AG04449 (cell line): ENCODE measurements at regions of chr2 and their contacts with region 1.

Region 1: DNA sequence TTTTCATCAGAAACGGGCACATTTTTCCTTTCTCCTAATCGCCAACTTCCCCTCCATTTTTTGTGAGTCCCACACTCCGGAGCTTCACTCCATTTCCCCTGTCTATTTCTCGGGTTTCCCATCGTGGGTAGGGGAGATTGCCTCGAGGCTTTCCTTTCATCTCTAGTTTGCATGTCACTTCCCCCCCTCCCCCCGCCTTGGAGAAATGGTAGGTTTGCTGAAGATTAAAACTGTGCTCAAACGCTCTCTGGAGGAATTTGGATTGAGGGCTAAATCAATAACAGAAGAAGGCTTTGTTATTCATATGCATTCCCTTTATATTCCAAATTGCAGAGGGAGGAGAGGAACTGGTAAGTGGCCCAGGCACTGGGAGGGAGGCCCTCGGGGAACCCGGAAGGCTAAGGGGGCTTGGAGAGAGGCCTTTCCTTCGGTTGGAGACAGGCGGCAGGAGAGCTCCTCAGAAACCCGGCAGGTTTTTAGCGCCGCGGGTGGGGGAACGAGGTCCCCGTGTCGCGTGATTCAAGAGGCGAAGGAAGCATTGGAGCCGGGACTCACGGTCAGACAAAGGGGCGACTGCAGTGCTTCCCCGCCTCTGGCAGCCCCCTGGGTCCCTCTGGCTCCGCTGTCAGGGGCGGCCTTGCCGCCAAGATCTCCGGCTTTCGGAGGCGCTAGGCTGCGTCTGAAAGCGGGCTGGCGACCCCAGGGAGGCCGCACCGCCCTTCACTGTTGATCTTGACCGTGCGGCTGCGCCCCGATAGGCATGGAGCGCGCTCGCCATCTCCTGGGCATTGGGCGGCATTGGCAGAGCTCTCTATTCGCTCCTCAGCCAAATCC is 2.4 kb upstream of the HOXD12 start:
- DNase-seq: no peak
- H3K4me3 ChIP-seq: peak overlapping the region; percentile 45
- CTCF ChIP-seq: peak; percentile 91

Region 2: GRCh38 chr2:175203621-175204496 is 893.3 kb before region 1 on chr2:
- CTCF ChIA-PET with region 1: interaction called, 12 read pairs
- POLR2A ChIA-PET with region 1: no interaction called
- DNase-seq: no peak
- H3K4me3 ChIP-seq: no peak overlapping the region
- CTCF ChIP-seq: peak; percentile 66

Region 3: GRCh38 chr2:175366815-175367214 is 730.4 kb before region 1 on chr2:
- CTCF ChIA-PET with region 1: interaction called, 82 read pairs
- POLR2A ChIA-PET with region 1: no interaction called
- DNase-seq: no peak
- H3K4me3 ChIP-seq: no peak overlapping the region
- CTCF ChIP-seq: peak; percentile 72

Region 4: DNA sequence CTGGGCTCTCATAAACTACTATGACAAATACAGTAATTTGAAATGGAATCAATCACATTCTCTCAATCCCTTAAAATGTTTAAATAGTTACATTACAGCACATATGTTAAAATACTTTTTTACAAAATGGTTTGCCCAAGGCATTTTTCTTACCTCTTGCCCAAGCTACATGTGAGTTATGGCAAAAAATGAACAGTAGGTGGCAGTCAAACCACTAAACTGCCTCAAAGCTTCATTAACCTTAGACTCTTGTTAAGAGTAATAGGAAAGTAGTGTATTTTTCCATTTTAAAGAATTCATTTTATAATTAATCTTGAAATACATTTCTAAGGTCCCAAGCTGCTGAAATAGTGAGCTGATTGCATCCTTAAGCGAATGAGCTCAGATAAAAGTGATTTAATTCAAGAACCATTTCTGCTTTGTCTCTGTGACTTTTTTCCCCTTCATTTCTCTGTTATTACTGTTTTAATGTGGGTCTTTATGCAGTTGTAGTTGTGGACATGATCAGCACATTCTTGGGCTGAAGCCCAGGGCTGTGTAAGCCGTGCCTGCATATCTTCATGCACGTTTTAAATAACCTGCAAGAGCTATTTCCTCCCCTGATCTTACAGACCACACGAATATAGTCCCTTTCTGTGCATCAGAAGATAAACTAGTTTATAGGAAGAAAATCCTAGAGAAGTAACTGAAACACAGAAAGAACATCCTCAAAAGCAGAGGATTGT is 406.9 kb before region 1 on chr2:
- CTCF ChIA-PET with region 1: interaction called, 47 read pairs
- POLR2A ChIA-PET with region 1: no interaction called
- DNase-seq: peak; percentile 24
- H3K4me3 ChIP-seq: no peak overlapping the region
- CTCF ChIP-seq: peak; percentile 35

Region 5: DNA sequence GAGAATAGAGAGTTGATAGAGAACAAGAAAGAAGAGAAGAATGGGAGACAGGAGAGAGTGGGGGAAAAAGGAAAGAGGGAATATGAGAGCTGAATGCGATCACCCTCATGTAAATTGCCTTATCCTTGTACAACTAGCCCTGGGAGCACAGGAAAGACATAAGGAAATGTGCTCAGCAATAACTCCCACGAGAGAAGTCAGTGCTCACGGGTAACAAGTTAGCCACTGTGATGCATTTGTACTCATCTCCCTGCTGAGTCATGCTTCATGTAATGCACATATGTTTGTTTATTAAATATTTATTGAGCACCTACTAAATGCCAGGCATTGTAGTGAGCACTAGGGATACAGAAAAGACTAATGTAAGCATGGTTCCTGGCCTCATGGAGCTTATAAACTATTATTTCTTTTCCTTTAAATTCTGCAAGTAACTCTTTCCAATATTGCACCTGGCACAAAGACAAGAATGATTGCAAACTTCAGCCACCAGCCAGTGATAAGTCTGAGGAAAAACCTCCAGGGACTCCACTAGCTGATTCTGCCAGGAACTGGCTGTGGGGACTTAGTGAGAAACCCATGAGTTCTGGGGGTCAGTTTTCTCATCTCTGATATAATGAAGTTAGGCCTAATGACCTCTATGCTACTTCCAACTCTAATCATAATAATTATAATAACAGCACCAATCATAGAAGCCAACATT is 219.2 kb before region 1 on chr2:
- CTCF ChIA-PET with region 1: no interaction called
- POLR2A ChIA-PET with region 1: no interaction called
- DNase-seq: no peak
- H3K4me3 ChIP-seq: no peak overlapping the region
- CTCF ChIP-seq: no peak

Region 6: DNA sequence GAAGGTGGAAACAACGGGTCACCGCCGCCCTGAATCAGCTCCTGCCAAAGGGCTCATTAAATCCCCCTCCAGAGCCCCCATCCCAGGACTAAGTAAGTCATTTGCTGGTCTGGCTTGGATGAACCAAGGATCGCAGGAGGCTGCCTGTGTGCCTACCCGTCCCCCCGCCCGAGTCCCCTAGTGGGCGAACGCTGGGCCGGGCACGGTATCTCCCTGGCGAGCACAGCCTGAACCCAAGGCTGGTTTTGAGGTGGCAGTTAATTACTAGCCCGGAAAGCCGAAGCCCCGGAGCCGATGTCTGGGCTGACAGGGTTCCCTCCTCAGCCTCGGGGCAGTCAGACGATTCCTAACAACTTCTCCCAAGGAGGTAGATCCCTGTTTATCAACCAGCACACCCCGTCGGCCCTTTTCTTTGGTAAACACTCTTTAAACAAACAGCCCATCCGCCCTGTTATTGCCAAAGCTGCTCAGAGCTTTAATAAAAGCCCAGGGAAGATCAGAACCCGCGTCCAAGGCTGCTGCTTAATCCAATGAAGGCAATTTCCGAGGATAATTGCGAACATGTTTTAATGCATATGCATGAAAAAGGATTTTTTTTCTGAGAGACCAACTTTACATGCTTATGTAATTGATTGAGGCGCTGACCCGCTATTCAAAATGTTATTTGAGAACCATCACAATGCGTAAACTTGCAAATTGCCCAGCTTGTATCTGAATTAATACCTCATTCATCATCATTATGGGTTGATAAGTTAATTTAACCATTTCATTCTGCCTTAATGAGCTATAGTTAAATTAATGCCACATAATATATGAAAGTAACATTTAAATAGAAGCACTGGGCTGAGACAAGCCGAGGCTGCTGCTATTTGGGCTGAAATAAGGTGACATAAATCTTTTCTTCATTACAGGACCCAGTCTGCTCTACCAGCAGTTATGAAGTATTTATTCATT is 24.0 kb before region 1 on chr2:
- CTCF ChIA-PET with region 1: no interaction called
- POLR2A ChIA-PET with region 1: no interaction called
- DNase-seq: no peak
- H3K4me3 ChIP-seq: no peak overlapping the region
- CTCF ChIP-seq: no peak

Region 7: GRCh38 chr2:176110975-176111663 is 13.9 kb after region 1 on chr2:
- CTCF ChIA-PET with region 1: interaction called, 39 read pairs
- POLR2A ChIA-PET with region 1: no interaction called
- DNase-seq: no peak
- H3K4me3 ChIP-seq: no peak overlapping the region
- CTCF ChIP-seq: peak; percentile 85

Region 8: DNA sequence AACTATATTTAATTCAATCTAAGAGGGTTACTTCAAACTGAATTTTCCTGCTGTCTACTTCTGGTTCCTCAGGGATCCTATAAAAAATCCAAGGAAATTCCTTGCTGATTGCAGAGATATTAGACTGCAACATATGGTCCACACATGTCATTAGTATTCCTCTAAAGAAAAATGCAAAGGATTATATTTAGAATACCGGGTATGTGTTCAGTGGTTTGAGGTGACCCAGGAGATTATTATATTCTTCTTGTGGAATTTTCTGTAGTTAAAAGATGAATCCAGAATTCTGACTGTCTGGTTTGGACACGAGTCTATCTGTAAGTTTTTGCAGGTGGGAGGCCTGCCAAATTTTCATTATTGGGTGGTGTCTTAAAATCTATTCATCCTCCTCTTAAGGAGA is 109.5 kb after region 1 on chr2:
- CTCF ChIA-PET with region 1: no interaction called
- POLR2A ChIA-PET with region 1: no interaction called
- DNase-seq: peak; percentile 16
- H3K4me3 ChIP-seq: no peak overlapping the region
- CTCF ChIP-seq: no peak

Region 9: GRCh38 chr2:176392249-176392648 is 295.0 kb after region 1 on chr2:
- CTCF ChIA-PET with region 1: no interaction called
- POLR2A ChIA-PET with region 1: no interaction called
- DNase-seq: no peak
- H3K4me3 ChIP-seq: no peak overlapping the region
- CTCF ChIP-seq: no peak